OCI-LY7 (cell line): ENCODE measurements at regions of chr17 and their contacts with region 1.

Region 1: GRCh38 chr17:47802341-47803022 is 19.1 kb downstream of the OSBPL7 start:
- DNase-seq: peak; percentile 81
- H3K4me3 ChIP-seq: no peak overlapping the region
- H3K27ac ChIP-seq: no peak overlapping the region
- H3K4me1 ChIP-seq: no peaks in the 10 kb centered on the region
- CTCF ChIP-seq: peak; percentile 85

Region 2: GRCh38 chr17:47776330-47777197 is 25.9 kb before region 1 on chr17:
- CTCF ChIA-PET with region 1: no interaction called
- POLR2A ChIA-PET with region 1: interaction called, 12 read pairs
- intact Hi-C with region 1: loop called (anchors 1 kb)
- DNase-seq: peak; percentile 55
- H3K4me3 ChIP-seq: no peak overlapping the region
- H3K27ac ChIP-seq: no peak overlapping the region
- H3K4me1 ChIP-seq: no peaks in the 10 kb centered on the region
- CTCF ChIP-seq: peak; percentile 84